Right cardiac atrium (tissue), 5 donors: ENCODE measurements at regions of chr16 and their contacts with region 1.

Region 1: DNA sequence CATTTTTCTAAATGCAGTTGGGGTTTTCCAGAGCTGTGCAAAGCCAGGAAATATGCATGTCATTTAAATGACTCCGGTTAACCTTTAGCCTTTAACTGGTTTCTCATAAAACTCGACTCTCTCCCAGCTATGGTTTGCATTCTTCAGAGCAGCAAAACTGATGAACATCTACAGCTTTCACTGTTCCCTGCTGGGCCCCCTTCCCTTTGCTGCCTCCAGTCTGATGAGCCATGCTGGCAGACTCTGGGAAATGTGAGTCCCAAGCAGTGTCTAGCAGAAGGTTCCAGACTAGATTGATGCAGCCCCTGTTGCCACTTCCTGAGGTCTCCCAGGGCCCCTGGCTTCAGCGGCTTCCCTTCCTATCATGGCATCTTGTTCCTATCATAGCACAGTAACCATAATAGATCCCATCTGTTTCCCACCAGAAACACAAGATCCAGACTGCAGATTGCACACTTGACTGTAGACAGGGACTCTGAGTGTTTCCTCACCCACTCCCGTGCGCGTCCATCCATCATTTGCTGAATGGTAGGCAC is 135.4 kb downstream of the CLEC16A start:
- DNase-seq: peak in 1 of 3 donors; percentile 24
- ATAC-seq: no peak
- H3K4me3 ChIP-seq: no peak overlapping the region
- H3K27ac ChIP-seq: no peak overlapping the region
- H3K4me1 ChIP-seq: no peaks in the 10 kb centered on the region
- H3K27me3 ChIP-seq: no peaks in the 10 kb centered on the region

Region 2: GRCh38 chr16:11025120-11025531 is 54.6 kb before region 1 on chr16:
- intact Hi-C with region 1: loop called in 1 of 4 experiments (anchors 10 kb)
- DNase-seq: no peak
- ATAC-seq: no peak
- H3K4me3 ChIP-seq: no peak overlapping the region
- H3K27ac ChIP-seq: no peak overlapping the region
- H3K4me1 ChIP-seq: peaks cover 6% of the 10 kb centered on the region
- H3K27me3 ChIP-seq: no peaks in the 10 kb centered on the region

Region 3: DNA sequence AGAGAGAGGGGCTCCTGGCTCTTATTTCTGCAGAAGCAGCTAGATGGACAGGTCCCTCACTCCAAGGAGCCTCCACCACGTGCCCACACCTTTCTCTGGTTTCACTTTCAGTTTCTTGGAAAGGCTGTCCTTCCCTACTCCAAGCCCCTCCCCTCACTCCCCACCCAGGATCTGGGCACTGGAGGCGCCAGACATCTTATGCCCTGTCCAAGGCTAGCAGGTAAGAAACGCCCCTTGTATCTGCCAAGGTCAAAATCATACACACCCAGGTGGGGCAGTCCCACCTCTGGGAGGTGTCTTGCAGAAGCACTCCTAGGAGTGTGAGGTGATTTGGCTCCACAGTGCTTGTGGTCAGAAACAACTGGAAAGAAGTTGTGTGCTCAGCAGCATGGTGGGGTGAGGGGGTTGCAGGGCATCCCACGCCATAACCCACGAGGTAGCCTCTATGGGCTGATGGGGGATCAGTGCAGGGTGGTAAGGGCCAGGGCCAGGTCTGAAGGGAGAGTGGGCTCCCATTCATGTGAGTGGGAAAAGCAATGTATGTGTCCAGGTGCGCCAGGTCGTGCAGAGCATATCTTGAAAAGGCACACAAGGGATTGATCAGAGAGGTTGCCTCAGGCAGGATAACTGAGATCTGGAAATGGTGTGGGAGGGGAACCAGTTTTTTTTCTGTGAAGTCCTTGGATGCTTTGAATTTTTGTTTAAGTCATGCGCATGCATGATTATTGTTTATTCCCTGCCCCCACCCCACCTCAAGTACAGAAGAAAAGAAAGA is 233.2 kb after region 1 on chr16:
- intact Hi-C with region 1: no loop called
- DNase-seq: peak in 1 of 3 donors; percentile 46
- ATAC-seq: peak in 1 of 2 donors; percentile 22
- H3K4me3 ChIP-seq: no peak overlapping the region
- H3K27ac ChIP-seq: no peak overlapping the region
- H3K4me1 ChIP-seq: no peaks in the 10 kb centered on the region
- H3K27me3 ChIP-seq: no peaks in the 10 kb centered on the region